ENCODE measurements at regions of chr16 and their contacts with region 1.

Region 1: GRCh38 chr16:58418601-58419000 is 26.3 kb downstream of the GINS3 start:
- DNase-seq: peak; percentile 82
- ATAC-seq: peak; percentile 66

Region 2: GRCh38 chr16:57899771-57900661 is 518.6 kb before region 1 on chr16:
- intact Hi-C with region 1: no loop called
- DNase-seq: peak; percentile 88
- ATAC-seq: peak; percentile 90

Region 3: GRCh38 chr16:58345574-58346354 is 72.8 kb before region 1 on chr16:
- intact Hi-C with region 1: loop called (anchors 5 kb)
- DNase-seq: no peak
- ATAC-seq: no peak